ENCODE measurements at regions of chr3 and their contacts with region 1.

Region 1: DNA sequence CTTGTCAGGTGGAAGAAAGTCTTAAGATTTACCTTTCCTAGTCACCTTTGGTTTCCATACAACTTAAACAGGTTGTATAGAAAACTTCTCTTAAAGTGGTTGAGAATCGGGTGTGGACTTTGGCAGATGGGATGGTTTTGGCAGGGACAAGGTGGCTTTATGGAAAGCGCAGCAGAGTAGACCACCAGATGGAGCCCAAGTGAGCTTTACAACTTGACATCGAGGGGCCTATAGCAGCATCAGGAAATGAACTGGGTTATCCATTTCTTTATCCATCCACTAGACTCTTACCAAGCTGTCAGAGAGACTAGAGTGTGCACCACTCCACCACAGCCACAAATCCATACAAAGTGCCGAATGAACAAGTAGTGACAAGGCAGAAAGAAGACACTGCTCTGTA is 85.3 kb upstream of the MBNL1 start:
- DNase-seq: no peak
- H3K4me3 ChIP-seq: no peak overlapping the region
- H3K27ac ChIP-seq: no peak overlapping the region
- H3K4me1 ChIP-seq: peaks cover 0 to 22% (median 9%) of the 10 kb centered on the region in 6 donors
- H3K27me3 ChIP-seq: no peaks in the 10 kb centered on the region
- CTCF ChIP-seq: peak; percentile 33 to 77 (median 68)
- POLR2A ChIP-seq: no peak

Region 2: GRCh38 chr3:152030320-152030719 is 153.2 kb before region 1 on chr3:
- intact Hi-C with region 1: no loop called
- DNase-seq: no peak
- H3K4me3 ChIP-seq: no peak overlapping the region
- H3K27ac ChIP-seq: no peak overlapping the region
- H3K4me1 ChIP-seq: no peaks in the 10 kb centered on the region
- H3K27me3 ChIP-seq: no peaks in the 10 kb centered on the region
- CTCF ChIP-seq: no peak
- POLR2A ChIP-seq: no peak

Region 3: GRCh38 chr3:152051501-152052404 is 131.7 kb before region 1 on chr3:
- intact Hi-C with region 1: no loop called
- DNase-seq: no peak
- H3K4me3 ChIP-seq: no peak overlapping the region
- H3K27ac ChIP-seq: no peak overlapping the region
- H3K4me1 ChIP-seq: no peaks in the 10 kb centered on the region
- H3K27me3 ChIP-seq: no peaks in the 10 kb centered on the region
- CTCF ChIP-seq: no peak
- POLR2A ChIP-seq: no peak

Region 4: GRCh38 chr3:152444029-152444641 is 260.7 kb after region 1 on chr3:
- intact Hi-C with region 1: loop called (anchors 5 kb)
- DNase-seq: no peak
- H3K4me3 ChIP-seq: no peak overlapping the region
- H3K27ac ChIP-seq: peak overlapping the region in 4 of 8 donors; percentile 10 to 63 (median 53)
- H3K4me1 ChIP-seq: peaks cover 23 to 100% (median 58%) of the 10 kb centered on the region in 6 donors
- H3K27me3 ChIP-seq: no peaks in the 10 kb centered on the region
- CTCF ChIP-seq: peak; percentile 47 to 82 (median 72)
- POLR2A ChIP-seq: no peak

Measured in spleen (tissue), 13 donors.